ENCODE measurements at regions of chr17 and their contacts with region 1.

Region 1: DNA sequence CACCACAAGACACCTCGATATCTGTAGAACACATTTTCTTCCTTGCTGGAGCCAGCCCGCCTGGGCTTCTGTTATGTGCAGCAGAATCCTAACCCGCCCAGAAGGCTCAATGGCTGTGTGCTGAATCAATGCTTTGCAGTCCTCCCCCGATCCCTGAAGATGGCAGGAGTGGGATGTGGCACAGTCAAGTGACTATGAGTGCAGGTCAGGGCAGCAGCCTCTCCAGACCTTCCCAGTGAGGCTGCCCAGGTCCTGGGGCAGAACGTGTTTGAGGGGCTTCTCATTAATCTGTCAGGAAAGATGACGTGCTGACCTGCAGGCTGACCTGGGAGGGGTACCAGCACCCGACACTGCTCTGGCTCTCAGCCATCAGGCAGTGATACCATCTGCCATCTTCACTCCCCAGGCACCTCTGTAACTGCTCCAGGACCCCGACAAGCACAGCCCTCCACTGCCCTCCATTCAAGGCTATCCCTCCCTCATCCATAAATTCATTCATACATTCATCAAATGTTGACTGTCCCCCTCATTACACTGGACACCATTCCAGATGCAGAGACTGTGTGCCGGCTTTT is 35.2 kb downstream of the LRRC75A start:
- DNase-seq: no peak
- H3K4me3 ChIP-seq: no peak overlapping the region
- H3K27ac ChIP-seq: no peak overlapping the region
- H3K4me1 ChIP-seq: no peaks in the 10 kb centered on the region
- H3K27me3 ChIP-seq: no peaks in the 10 kb centered on the region

Region 2: GRCh38 chr17:16516594-16517051 is 59.8 kb after region 1 on chr17:
- in situ Hi-C with region 1: loop called (anchors 5 kb)
- DNase-seq: peak; percentile 75
- H3K4me3 ChIP-seq: peak overlapping the region; percentile 54
- H3K27ac ChIP-seq: no peak overlapping the region
- H3K4me1 ChIP-seq: peaks cover 11% of the 10 kb centered on the region
- H3K27me3 ChIP-seq: no peaks in the 10 kb centered on the region

Region 3: DNA sequence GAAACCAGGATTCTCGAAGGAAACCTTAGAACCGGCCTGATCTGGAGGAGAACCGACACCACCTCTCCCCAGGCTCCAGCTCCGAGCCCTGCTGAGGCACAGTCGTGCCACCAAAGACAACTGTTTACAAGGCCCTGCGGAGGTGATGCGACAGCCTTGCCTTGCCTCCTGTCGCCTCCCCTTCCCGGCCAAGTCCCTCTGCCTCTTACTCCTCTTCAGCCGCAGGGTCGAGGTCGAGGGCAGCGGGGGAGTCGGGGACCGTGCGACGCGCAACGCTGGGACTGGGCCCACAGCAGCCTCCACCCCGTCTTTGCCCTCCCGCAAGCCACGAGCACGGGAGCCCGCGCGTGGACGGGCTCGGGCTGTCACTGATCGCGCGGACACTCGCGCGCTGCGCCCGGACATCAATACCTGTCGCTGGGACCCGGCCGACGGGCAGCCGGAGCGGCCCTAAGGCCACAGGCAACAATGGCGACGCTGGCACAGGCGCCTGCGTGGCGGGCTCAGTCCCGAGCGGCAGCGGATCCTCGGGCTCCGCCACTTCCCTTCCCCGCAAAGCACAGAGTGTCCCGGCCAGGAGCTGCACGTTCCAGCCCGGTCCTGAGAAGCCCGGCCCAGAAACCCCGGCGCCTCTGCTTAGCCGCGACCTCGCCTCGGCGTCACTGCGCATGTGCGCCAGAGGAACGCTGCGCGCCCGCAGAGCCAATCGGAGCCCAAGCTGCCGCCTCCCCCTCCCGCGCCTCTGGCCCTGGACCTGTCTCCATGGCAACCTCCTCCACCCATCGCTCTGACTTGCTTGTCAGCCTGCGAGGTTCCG is 111.9 kb after region 1 on chr17 and contains the start of gene ZNF287:
- in situ Hi-C with region 1: no loop called
- DNase-seq: peak; percentile 97
- H3K4me3 ChIP-seq: peak within 1 kb of the TSS; percentile 80
- H3K27ac ChIP-seq: no peak within 1 kb of the TSS
- H3K4me1 ChIP-seq: 0 out of 2 replicates have a peak, but pooled peaks cover 4% of the 10 kb centered on the region
- H3K27me3 ChIP-seq: no peaks in the 10 kb centered on the region
- total RNA-seq, gene ZNF287: 11.7 and 14.3 TPM in 2 replicates

Measured in GM23248 (cell line).